ENCODE measurements at regions of chr11 and their contacts with region 1.

Region 1: DNA sequence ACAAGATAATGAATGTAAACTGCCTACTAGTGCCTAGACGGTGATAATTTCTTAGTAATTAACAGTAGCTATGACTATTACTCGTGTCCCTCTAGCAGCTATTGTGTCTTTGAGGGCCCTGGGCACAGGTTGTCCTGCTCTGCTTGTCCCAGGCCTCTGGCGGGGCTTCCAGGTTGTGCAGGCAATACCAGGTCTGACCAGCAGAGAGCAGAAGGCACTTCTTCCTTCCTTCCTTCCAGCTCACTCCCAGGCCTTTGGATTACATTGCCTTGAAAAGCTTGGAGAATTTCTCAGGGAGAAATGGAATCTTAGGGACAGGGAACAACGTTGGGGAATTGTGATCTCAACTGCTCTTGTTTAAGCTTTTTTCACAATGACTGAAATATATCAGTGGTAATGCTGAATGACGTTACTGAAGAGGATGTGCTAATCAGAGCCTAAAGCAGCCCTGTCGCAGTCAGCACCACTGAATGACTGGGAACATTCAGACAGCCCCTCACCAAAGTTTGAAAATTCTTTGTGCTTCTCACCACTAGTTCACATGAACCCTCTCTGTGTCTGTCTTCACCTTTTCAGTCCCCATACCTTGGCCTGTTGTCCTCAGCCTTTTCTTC is 8.4 kb upstream of the CCKBR start:
- DNase-seq: peak; percentile 64
- ATAC-seq: peak; percentile 99
- H3K4me3 ChIP-seq: no peak overlapping the region
- H3K27ac ChIP-seq: no peak overlapping the region
- H3K4me1 ChIP-seq: peaks cover 0 to 9% of the 10 kb centered on the region in 2 experiments; a peak in 2 of 4 replicates
- H3K27me3 ChIP-seq: peaks cover 13% of the 10 kb centered on the region; the same call in 1 of the 2 replicates
- CTCF ChIP-seq: peak; percentile 84 to 97 (median 92)
- POLR2A ChIP-seq: no peak
- RAD21 ChIP-seq: peak; percentile 68

Region 2: DNA sequence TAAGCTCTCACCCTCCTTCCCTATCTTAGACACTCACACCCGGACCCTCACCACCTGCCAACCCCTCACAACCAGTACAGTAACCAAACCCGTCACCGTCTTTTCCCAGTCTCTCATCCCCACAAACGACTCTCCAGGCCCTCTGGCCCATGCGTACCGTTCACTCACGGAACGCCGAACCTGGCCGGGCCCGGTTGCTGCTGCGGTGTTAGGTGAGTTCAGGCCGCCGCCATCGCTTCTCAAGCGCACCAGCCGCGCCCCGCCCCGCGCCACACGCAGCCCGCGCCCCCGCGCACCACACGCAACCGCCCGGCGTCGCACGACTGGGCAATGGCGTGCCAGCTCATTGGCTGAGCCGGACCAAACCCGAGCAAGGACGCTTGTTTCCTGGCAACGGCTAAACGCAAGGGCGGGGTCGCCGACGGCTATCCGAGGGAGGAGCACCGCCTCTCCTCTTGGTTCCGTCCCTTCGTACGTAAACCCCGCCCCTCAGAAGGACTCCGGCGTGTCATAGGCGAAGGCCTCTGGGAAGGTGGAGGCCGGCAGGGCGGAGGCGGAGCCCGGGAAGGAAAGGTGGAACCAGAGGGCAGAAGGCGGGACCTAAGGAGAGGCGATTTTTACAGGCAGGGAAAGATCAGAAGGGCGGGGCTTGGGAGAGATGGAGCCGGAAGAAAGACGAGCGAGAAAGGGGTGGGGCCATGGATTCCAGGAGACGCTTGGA is 16.7 kb before region 1 on chr11 and contains the start of gene FHIP1B:
- CTCF ChIA-PET with region 1: interaction called, 12 read pairs
- POLR2A ChIA-PET with region 1: interaction called, 4 read pairs
- RAD21 ChIA-PET with region 1: interaction called in 1 of 2 experiments, 3 read pairs
- intact Hi-C with region 1: no loop called
- DNase-seq: peak; percentile 100
- ATAC-seq: peak; percentile 96
- H3K4me3 ChIP-seq: peak within 1 kb of the TSS; percentile 93 to 97
- H3K27ac ChIP-seq: peak within 1 kb of the TSS; percentile 64
- H3K4me1 ChIP-seq: peaks cover 0 to 16% of the 10 kb centered on the region in 2 experiments; a peak in 2 of 4 replicates
- H3K27me3 ChIP-seq: no peaks in the 10 kb centered on the region
- CTCF ChIP-seq: no peak
- POLR2A ChIP-seq: no peak
- RAD21 ChIP-seq: no peak
- total RNA-seq, gene FHIP1B: 32.1 TPM

Region 3: GRCh38 chr11:6285019-6285418 is 33.8 kb after region 1 on chr11:
- CTCF ChIA-PET with region 1: interaction called, 22 read pairs
- POLR2A ChIA-PET with region 1: interaction called, 5 read pairs
- RAD21 ChIA-PET with region 1: no interaction called
- intact Hi-C with region 1: no loop called
- DNase-seq: no peak
- ATAC-seq: no peak
- H3K4me3 ChIP-seq: no peak overlapping the region
- H3K27ac ChIP-seq: no peak overlapping the region
- H3K4me1 ChIP-seq: peaks cover 0 to 10% of the 10 kb centered on the region in 2 experiments; a peak in 3 of 4 replicates
- H3K27me3 ChIP-seq: peaks cover 43% of the 10 kb centered on the region
- CTCF ChIP-seq: no peak
- POLR2A ChIP-seq: no peak
- RAD21 ChIP-seq: no peak

Region 4: GRCh38 chr11:6298605-6299004 is 47.4 kb after region 1 on chr11:
- CTCF ChIA-PET with region 1: interaction called, 27 read pairs
- POLR2A ChIA-PET with region 1: interaction called, 5 read pairs
- RAD21 ChIA-PET with region 1: interaction called in 1 of 2 experiments, 3 read pairs
- intact Hi-C with region 1: no loop called
- DNase-seq: peak; percentile 51
- ATAC-seq: peak; percentile 100
- H3K4me3 ChIP-seq: no peak overlapping the region
- H3K27ac ChIP-seq: no peak overlapping the region
- H3K4me1 ChIP-seq: no peaks in the 10 kb centered on the region
- H3K27me3 ChIP-seq: no peaks in the 10 kb centered on the region
- CTCF ChIP-seq: peak; percentile 97 to 100 (median 99)
- POLR2A ChIP-seq: no peak
- RAD21 ChIP-seq: peak; percentile 70

Region 5: DNA sequence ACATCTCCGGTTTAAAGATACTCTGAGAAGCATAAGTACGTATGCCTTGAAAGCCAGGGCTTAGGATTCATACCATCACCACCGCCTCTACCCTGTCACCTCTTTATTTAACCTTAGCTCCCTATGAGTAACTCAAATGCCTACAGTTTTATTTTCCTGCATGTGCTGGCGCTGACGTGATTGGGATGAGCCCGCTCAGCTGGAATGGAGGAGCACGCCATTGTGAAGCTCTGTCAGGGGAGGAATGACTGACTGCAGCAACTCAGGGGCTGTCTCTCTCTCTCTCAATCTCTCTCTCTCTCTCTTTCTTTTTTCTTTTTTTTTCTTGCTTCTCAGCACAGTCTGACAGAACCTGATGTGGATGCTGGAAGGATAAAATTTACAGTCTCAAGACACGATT is 56.6 kb after region 1 on chr11:
- CTCF ChIA-PET with region 1: interaction called, 11 read pairs
- POLR2A ChIA-PET with region 1: no interaction called
- RAD21 ChIA-PET with region 1: interaction called in 1 of 2 experiments, 3 read pairs
- intact Hi-C with region 1: no loop called
- DNase-seq: no peak
- ATAC-seq: no peak
- H3K4me3 ChIP-seq: no peak overlapping the region
- H3K27ac ChIP-seq: no peak overlapping the region
- H3K4me1 ChIP-seq: no peaks in the 10 kb centered on the region
- H3K27me3 ChIP-seq: peaks cover 10% of the 10 kb centered on the region
- CTCF ChIP-seq: no peak
- POLR2A ChIP-seq: no peak
- RAD21 ChIP-seq: no peak

Region 6: GRCh38 chr11:6315811-6316425 is 64.7 kb after region 1 on chr11:
- CTCF ChIA-PET with region 1: interaction called, 19 read pairs
- POLR2A ChIA-PET with region 1: no interaction called
- RAD21 ChIA-PET with region 1: no interaction called
- intact Hi-C with region 1: loop called (anchors 1 kb)
- DNase-seq: peak; percentile 41
- ATAC-seq: peak; percentile 69
- H3K4me3 ChIP-seq: no peak overlapping the region
- H3K27ac ChIP-seq: no peak overlapping the region
- H3K4me1 ChIP-seq: peaks cover 14 to 27% of the 10 kb centered on the region in 2 experiments
- H3K27me3 ChIP-seq: no peaks in the 10 kb centered on the region
- CTCF ChIP-seq: peak; percentile 84 to 95 (median 93); a peak in 5 of 6 replicates
- POLR2A ChIP-seq: no peak
- RAD21 ChIP-seq: peak; percentile 81

Region 7: GRCh38 chr11:6523253-6523652 is 272.0 kb after region 1 on chr11:
- CTCF ChIA-PET with region 1: no interaction called
- POLR2A ChIA-PET with region 1: no interaction called
- RAD21 ChIA-PET with region 1: no interaction called
- intact Hi-C with region 1: no loop called
- DNase-seq: peak; percentile 24
- ATAC-seq: peak; percentile 74
- H3K4me3 ChIP-seq: no peak overlapping the region
- H3K27ac ChIP-seq: no peak overlapping the region
- H3K4me1 ChIP-seq: peaks cover 8 to 11% of the 10 kb centered on the region in 2 experiments; a peak in 3 of 4 replicates
- H3K27me3 ChIP-seq: no peaks in the 10 kb centered on the region
- CTCF ChIP-seq: no peak
- POLR2A ChIP-seq: no peak
- RAD21 ChIP-seq: no peak

Region 8: GRCh38 chr11:6667733-6668374 is 416.6 kb after region 1 on chr11:
- CTCF ChIA-PET with region 1: no interaction called
- POLR2A ChIA-PET with region 1: no interaction called
- RAD21 ChIA-PET with region 1: no interaction called
- intact Hi-C with region 1: no loop called
- DNase-seq: peak; percentile 38
- ATAC-seq: peak; percentile 94
- H3K4me3 ChIP-seq: no peak overlapping the region
- H3K27ac ChIP-seq: no peak overlapping the region
- H3K4me1 ChIP-seq: peaks cover 0 to 4% of the 10 kb centered on the region in 2 experiments; a peak in 2 of 4 replicates
- H3K27me3 ChIP-seq: no peaks in the 10 kb centered on the region
- CTCF ChIP-seq: peak; percentile 61 to 63 (median 63); a peak in 5 of 6 replicates
- POLR2A ChIP-seq: no peak
- RAD21 ChIP-seq: peak; percentile 49

Measured in HCT116 (cell line).